ENCODE measurements at regions of chr1 and their contacts with region 1.

Region 1: DNA sequence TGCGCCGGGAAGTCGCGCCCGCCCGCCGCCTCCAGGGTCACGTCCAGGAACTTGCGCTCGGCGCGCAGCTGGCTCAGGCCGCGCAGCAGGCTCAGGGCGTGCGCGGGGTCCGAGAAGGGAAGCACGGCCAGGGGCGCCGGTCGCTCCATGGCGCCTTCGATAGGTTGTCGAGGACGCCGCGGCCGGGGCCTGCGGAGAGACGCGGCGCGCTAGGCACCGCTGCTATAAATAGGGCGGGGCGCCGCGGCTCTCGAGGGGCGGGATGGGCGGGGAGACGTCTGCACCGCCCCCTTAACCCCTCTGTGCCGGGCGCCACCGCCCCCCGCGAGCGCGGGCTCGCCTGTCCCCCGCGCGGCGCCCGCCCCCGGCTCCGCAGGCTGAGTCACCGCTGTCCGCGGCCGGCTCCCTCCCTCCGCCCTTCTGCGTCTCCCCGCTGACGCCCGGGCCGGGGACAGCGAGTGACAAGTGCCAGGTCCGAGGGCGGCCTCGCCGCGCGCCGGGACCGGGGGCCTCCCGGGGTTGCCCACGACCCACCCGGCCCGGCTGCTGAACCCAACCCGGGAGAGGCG is at the start of gene KLHL21:
- DNase-seq: peak; percentile 93
- ATAC-seq: peak; percentile 86
- total RNA-seq, gene KLHL21: 102 TPM

Region 2: DNA sequence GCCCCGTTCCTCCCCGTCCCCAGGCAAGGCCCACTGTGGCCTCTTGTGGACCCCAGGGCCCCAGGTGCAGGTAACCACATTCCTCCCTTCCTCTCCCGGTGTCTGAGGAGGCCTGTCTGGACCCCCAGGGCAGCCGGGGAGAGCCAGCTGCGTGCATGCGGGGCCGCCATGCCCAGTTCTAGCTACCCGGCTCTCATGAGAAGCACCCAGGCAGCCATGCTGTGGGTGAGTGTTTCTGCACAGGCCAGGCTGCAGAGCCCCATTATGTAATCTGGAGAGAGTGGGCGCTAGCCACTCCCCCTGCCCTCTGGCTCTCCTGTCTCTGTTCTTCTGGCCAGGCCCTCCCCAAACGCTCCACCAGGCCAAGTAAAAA is 92.8 kb before region 1 on chr1:
- intact Hi-C with region 1: no loop called
- DNase-seq: no peak
- ATAC-seq: peak; percentile 44

Region 3: DNA sequence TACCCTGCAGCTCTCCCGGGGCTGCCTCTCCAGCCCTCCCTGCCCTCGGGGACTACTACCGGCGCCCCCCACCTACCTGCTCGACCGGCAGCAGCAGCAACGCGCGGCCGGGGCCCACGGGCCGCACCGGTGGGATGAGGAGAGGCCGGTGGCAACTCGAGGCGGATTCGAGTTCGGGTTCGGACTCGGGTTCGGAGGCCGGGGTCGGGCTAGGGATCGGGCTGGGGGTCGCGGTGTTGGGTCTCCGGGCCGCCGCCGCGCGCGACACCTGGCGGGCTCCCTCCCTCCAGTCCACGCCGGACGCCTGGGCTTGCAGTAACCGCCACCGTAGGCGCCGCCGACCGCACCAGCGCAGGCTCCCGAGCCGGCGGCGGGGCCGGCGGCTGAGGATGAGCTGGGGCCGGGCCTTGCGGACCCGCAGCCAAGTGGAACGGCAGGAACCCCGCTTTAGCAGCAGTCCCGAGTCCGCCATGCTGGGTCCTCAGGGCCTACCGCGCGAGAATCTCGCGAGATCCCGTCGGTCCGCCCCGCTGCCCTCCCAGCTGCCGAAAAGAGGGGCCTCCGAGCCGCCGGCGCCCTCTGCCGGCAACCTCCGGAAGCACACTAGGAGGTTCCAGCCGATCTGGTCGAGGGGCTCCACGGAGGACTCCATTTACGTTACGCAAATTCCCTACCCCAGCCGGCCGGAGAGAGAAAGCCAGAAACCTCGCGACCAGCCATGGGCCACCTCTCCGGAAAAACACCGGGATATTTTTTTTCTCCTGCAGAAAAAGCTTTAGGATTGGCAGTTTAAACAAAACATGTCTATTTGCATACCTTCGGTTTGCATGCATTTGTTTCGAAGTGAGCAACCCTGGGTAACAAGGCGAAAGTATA is 48.5 kb before region 1 on chr1 and contains the start of gene NOL9:
- intact Hi-C with region 1: loop called (anchors 1 kb)
- DNase-seq: peak; percentile 98
- ATAC-seq: peak; percentile 95
- total RNA-seq, gene NOL9: 12.6 TPM

Region 4: DNA sequence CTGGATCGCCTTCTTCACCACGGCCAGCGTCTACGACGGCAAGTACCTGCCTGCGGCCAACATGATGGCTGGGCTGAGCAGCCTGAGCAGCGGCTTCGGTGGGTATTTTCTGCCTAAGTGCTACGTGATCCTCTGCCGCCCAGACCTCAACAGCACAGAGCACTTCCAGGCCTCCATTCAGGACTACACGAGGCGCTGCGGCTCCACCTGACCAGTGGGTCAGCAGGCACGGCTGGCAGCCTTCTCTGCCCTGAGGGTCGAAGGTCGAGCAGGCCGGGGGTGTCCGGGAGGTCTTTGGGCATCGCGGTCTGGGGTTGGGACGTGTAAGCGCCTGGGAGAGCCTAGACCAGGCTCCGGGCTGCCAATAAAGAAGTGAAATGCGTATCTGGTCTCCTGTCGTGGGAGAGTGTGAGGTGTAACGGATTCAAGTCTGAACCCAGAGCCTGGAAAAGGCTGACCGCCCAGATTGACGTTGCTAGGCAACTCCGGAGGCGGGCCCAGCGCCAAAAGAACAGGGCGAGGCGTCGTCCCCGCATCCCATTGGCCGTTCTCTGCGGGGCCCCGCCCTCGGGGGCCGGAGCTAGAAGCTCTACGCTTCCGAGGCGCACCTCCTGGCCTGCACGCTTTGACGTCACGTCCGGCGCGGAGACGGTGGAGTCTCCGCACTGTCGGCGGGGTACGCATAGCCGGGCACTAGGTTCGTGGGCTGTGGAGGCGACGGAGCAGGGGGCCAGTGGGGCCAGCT is 23.2 kb before region 1 on chr1 and contains the start of gene ZBTB48:
- intact Hi-C with region 1: loop called (anchors 2 kb)
- DNase-seq: peak; percentile 100
- ATAC-seq: peak; percentile 97
- total RNA-seq, gene ZBTB48: 15.1 TPM

Region 5: DNA sequence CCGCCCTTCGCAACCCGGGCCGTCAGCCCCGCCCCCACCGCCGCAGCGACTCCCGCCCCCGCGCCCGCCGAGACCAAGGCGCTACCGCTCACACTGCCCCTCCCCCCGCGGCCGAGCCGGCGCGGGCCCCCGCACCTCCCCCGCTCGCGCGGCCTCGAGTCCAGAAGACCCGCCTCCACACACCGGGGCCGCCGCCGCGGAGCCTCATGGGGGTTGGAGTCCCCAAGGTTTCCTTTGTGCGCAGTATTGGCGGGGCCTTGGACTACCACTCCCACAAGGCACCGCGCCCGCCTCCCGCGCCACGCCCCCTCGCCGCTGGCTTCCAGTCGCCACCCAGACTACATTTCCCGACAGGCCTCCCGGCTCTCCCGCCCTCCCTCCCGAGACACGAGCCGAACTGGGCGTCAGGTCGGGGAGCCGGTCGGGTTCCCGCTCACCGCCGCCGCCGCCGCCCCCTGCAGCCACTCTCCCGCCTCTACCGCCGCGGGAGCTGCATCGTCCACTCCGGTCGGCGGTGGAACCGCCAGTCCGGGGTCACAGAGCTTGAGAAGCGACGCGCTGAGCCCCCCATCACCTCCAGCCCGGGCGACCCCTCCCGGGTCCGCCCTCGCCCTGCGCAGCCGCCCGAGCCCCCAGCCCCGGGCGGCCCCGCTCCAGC is 10.7 kb after region 1 on chr1 and contains the start of gene PHF13:
- intact Hi-C with region 1: loop called (anchors 1 kb)
- DNase-seq: peak; percentile 100
- ATAC-seq: peak; percentile 98
- total RNA-seq, gene PHF13: 8.0 TPM

Measured in Right ventricle myocardium inferior (tissue), 1 donor.